Activated B cell treated with CpG ODN at 0.5 μM for 24 hours (primary cell): ENCODE measurements at regions of chr19 and their contacts with region 1.

Region 1: GRCh38 chr19:50784710-50785109 is 5.5 kb upstream of the ACP4 start:
- DNase-seq: no peak
- ATAC-seq: no peak
- H3K4me3 Mint-ChIP-seq: no peak overlapping the region
- H3K27ac Mint-ChIP-seq: no peak overlapping the region
- H3K4me1 Mint-ChIP-seq: peaks cover 2% of the 10 kb centered on the region
- H3K27me3 Mint-ChIP-seq: peaks cover 26% of the 10 kb centered on the region
- CTCF ChIP-seq: no peak

Region 2: GRCh38 chr19:50537762-50538230 is 246.9 kb before region 1 on chr19:
- CTCF ChIA-PET with region 1: interaction called, 15 read pairs
- POLR2A ChIA-PET with region 1: no interaction called
- intact Hi-C with region 1: loop called (anchors 1 kb)
- DNase-seq: peak; percentile 41
- ATAC-seq: no peak
- H3K4me3 Mint-ChIP-seq: no peak overlapping the region
- H3K27ac Mint-ChIP-seq: no peak overlapping the region
- H3K4me1 Mint-ChIP-seq: no peaks in the 10 kb centered on the region
- H3K27me3 Mint-ChIP-seq: peaks cover 16% of the 10 kb centered on the region
- CTCF ChIP-seq: no peak

Region 3: DNA sequence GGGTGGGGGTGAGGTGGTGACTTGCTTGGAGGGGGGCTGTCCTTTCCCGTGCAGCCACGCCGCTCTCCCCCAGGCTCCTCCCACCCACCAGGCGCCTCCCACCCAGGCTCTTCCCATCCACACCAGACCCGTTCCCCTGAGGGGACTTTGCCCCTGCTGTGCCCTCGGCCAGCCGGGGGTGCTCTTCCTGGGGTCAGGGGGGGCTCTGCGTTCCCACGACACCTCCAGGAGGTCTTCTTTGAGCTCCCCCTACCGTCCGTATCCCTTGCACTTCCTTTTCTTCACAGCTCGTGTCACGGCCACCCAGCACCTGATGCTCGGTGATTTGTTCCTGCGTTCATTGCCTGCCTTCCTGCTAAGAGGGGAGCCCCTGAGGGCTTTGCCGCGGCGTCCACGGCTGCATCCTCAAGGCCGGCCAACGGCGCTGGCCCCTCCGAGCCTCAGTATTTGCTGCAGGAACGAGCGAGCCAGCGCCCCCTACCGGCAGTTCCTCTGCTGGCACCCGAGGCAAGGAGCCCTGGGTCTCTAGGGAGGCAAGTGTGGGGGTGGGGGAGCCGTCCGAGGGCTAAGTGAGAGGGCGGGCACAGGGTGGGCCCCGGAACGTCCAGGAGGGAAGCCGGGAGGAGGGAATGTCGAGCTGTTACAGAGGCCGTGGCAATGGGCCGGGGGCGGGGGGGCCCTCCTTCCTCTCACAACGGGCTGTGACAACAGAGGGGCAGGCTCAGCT is 228.3 kb before region 1 on chr19:
- CTCF ChIA-PET with region 1: no interaction called
- POLR2A ChIA-PET with region 1: no interaction called
- intact Hi-C with region 1: no loop called
- DNase-seq: peak; percentile 61
- ATAC-seq: peak; percentile 81
- H3K4me3 Mint-ChIP-seq: peak overlapping the region; percentile 84
- H3K27ac Mint-ChIP-seq: no peak overlapping the region
- H3K4me1 Mint-ChIP-seq: peaks cover 11% of the 10 kb centered on the region
- H3K27me3 Mint-ChIP-seq: peaks cover 57% of the 10 kb centered on the region
- CTCF ChIP-seq: peak; percentile 71

Region 4: GRCh38 chr19:50677636-50678035 is 107.1 kb before region 1 on chr19:
- CTCF ChIA-PET with region 1: no interaction called
- POLR2A ChIA-PET with region 1: no interaction called
- intact Hi-C with region 1: no loop called
- DNase-seq: no peak
- ATAC-seq: no peak
- H3K4me3 Mint-ChIP-seq: no peak overlapping the region
- H3K27ac Mint-ChIP-seq: peak overlapping the region; percentile 42
- H3K4me1 Mint-ChIP-seq: peaks cover 19% of the 10 kb centered on the region
- H3K27me3 Mint-ChIP-seq: peaks cover 21% of the 10 kb centered on the region
- CTCF ChIP-seq: no peak

Region 5: GRCh38 chr19:50912727-50913716 is 128.3 kb after region 1 on chr19:
- CTCF ChIA-PET with region 1: no interaction called
- POLR2A ChIA-PET with region 1: no interaction called
- intact Hi-C with region 1: no loop called
- DNase-seq: no peak
- ATAC-seq: peak; percentile 33
- H3K4me3 Mint-ChIP-seq: peak overlapping the region; percentile 25
- H3K27ac Mint-ChIP-seq: no peak overlapping the region
- H3K4me1 Mint-ChIP-seq: peaks cover 13% of the 10 kb centered on the region
- H3K27me3 Mint-ChIP-seq: peaks cover 34% of the 10 kb centered on the region
- CTCF ChIP-seq: no peak

Region 6: GRCh38 chr19:51668216-51668615 is 883.5 kb after region 1 on chr19:
- CTCF ChIA-PET with region 1: no interaction called
- POLR2A ChIA-PET with region 1: no interaction called
- intact Hi-C with region 1: no loop called
- DNase-seq: no peak
- ATAC-seq: no peak
- H3K4me3 Mint-ChIP-seq: no peak overlapping the region
- H3K27ac Mint-ChIP-seq: no peak overlapping the region
- H3K4me1 Mint-ChIP-seq: no peaks in the 10 kb centered on the region
- H3K27me3 Mint-ChIP-seq: peaks cover 33% of the 10 kb centered on the region
- CTCF ChIP-seq: no peak